HCT116 (cell line): ENCODE measurements at regions of chr22 and their contacts with region 1.

Region 1: DNA sequence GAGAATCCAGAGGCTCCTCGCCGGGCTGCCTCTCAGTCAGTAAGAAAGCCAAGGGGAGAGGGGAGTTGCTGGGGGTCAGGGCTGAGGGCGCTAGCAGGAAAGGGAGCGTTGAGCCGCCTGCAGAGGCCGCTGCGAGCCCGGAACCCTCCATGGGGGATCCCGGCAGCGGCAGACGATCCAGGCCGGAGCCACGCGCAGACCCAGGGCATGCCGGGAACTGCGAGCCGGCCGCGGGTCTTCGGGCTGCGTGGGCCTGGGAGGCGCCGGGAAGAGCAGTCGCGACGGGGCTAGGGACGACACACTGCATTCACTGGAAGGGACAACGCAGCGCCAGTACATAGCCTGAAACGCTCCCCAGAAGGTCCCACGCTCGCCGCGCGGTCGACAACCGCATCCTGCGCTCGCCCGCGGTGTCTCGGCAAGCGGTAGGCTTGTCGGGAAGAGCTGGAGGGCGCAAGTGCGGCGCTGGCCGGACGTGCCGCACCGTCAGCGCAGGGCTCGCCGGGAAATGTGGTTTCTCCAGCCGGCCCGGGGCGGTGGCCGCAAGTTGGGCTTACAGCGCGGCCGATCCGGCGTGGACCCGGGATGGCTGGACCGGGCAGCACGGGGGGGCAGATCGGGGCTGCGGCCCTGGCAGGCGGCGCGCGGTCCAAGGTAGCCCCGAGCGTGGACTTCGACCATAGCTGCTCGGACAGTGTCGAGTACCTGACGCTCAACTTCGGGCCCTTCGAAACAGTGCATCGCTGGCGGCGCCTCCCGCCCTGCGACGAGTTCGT is at the start of gene LZTR1:
- DNase-seq: peak; percentile 50
- ATAC-seq: peak; percentile 95
- H3K4me3 ChIP-seq: peak within 1 kb of the TSS; percentile 77 to 89
- H3K27ac ChIP-seq: peak within 1 kb of the TSS; percentile 80
- H3K4me1 ChIP-seq: peaks cover 6 to 18% of the 10 kb centered on the region in 2 experiments; a peak in 2 of 4 replicates
- H3K27me3 ChIP-seq: no peaks in the 10 kb centered on the region
- CTCF ChIP-seq: peak; percentile 48 to 68 (median 56); a peak in 5 of 6 replicates
- POLR2A ChIP-seq: peak; percentile 97
- RAD21 ChIP-seq: peak; percentile 39
- total RNA-seq, gene LZTR1: 56.5 TPM

Region 2: DNA sequence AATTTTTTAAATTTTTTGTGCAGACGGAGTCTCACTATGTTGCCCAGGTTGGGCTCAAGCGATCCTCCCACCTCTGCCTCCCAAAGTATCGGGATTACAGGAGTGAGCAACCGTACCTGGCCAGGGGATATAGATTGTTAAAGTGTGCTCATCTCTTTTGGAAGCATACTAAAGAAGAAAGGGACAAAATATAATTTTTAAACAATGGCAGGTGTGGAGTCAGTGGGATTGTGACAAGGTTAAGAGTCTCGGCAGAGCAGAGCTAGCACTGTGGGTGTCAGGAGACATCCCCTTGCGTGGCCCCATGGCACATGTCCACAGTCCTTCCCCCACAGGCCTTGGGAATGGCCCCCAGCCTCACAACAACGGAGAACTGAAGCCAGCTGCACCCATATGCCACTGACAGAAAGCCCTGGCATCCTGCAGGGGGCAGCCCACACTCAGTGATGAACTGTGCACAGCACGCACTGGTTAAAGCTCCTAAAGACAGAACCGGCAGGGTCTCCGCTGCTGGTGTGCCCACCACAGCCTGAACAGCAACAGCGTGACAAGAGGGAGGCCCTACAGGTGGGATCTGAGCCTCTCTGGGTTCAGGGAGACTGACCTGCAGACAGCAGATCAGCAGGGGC is 178.2 kb before region 1 on chr22:
- CTCF ChIA-PET with region 1: no interaction called
- POLR2A ChIA-PET with region 1: no interaction called
- RAD21 ChIA-PET with region 1: no interaction called
- intact Hi-C with region 1: loop called (anchors 5 kb)
- DNase-seq: peak; percentile 3
- ATAC-seq: peak; percentile 81
- H3K4me3 ChIP-seq: no peak overlapping the region
- H3K27ac ChIP-seq: no peak overlapping the region
- H3K4me1 ChIP-seq: peaks cover 10 to 23% of the 10 kb centered on the region in 2 experiments
- H3K27me3 ChIP-seq: no peaks in the 10 kb centered on the region
- CTCF ChIP-seq: peak; percentile 30 to 71 (median 66); a peak in 5 of 6 replicates
- POLR2A ChIP-seq: no peak
- RAD21 ChIP-seq: peak; percentile 69

Region 3: DNA sequence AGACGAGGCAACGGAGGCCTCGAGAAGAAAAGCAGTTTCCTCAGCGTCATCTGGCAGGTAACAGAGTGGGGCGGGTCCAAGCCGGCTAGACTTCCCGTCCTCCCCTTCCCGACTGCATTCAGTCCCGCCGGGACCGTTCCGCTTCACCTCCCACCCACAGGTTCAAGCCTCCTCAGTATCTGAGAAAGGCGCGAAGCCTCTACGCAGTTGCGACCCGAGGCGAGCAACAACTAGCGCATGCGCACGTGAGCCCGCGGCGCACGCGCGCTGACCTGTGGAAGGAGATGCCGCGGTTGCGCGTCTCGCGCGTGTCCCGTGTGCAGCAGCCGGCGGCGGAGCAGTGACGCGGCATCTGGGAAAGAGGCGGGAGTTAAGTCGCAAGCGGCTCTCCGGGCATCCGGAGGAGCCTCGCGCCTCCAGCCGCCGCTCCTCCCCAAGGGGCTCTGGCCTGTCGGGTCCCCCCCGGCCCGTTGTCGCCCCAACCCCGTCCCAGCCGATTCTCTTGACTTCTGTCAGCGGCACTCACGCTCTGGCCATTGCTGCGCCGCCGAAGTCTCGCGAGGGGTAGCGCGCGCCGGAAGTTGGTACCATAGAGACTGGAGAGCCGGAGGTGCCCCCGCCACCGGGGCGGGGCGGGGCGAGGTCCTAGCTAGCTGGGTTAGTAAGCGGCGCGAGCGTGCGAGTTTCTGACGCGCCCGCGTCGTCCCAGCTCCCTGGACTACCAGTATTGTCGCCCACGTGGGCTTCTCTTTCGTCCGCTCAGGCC is 19.8 kb after region 1 on chr22 and contains the start of gene THAP7:
- CTCF ChIA-PET with region 1: no interaction called
- POLR2A ChIA-PET with region 1: no interaction called
- RAD21 ChIA-PET with region 1: interaction called in 1 of 2 experiments, 3 read pairs
- intact Hi-C with region 1: loop called (anchors 2 kb)
- DNase-seq: peak; percentile 89
- ATAC-seq: peak; percentile 88
- H3K4me3 ChIP-seq: peak within 1 kb of the TSS; percentile 81 to 87
- H3K27ac ChIP-seq: peak within 1 kb of the TSS; percentile 97
- H3K4me1 ChIP-seq: peaks cover 17 to 28% of the 10 kb centered on the region in 2 experiments
- H3K27me3 ChIP-seq: no peaks in the 10 kb centered on the region
- CTCF ChIP-seq: no peak
- POLR2A ChIP-seq: peak; percentile 84
- RAD21 ChIP-seq: no peak
- total RNA-seq, gene THAP7: 27.7 TPM